Mammary epithelial cell (primary cell): ENCODE measurements at regions of chr2 and their contacts with region 1.

Region 1: DNA sequence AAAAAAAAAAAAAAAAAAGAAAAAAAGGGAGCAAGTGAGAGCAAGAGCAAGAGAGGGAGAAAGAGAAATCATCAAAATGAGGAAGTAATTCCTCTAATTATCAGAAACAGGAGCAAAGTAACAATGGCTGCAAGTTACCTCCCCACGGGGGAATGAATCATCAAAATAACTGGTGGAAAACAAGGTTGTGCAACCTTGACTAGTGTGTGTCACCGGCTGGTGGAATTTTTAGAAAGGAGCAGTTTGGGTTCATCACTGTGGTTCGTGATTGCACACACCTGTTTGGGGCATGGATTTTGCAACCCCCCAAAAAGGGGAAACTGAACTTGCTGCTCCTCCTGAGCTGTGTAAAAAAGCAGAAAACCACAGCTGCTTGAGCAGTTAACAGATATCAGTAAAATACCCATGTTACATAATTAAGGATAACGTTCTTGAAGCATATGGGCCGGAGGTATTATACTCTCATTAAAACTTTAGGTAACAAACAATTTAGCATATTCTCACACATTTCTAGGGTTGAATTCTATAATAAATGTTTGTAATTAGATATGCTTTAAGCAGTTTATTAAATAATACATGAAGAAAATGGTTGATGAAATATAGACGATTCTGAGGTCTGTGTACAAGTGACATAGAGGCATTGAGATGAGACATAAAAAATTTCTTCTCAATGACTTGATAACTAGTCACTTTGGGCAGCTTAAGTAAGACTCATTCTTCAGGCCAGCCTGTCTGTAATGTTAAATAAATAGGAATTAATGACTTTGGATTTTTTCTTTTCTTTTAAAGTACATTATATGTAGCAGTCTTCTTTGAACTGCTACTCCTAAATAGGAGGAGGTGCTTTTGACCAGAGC is 184.2 kb upstream of the ZEB2 start:
- DNase-seq: peak; percentile 90
- H3K4me3 ChIP-seq: no peak overlapping the region
- H3K27ac ChIP-seq: no peak overlapping the region
- H3K4me1 ChIP-seq: peaks cover 7% of the 10 kb centered on the region
- H3K27me3 ChIP-seq: no peaks in the 10 kb centered on the region
- CTCF ChIP-seq: no peak

Region 2: DNA sequence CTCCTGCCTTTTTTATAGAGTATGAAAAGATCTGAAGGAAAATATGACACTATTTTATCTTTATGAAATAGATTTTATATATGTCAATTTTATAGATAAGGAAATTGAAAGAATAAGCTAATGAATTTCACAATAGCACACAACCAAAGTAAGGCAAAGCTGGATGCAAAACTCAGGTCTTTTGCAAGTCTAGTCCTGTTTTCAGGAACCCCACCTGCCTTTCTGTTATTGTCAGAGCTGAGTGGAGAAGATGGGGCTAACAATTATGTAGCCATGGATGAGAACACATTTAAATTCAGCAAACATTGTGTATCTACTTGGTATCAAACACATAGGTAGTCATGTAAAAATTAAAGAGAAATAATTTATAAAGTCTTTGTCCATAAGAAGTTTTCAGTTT is 22.7 kb before region 1 on chr2:
- CTCF ChIA-PET with region 1: no interaction called
- dilution Hi-C with region 1: no loop called
- in situ Hi-C with region 1: no loop called
- intact Hi-C with region 1: loop called (anchors 1 kb)
- DNase-seq: peak; percentile 34
- H3K4me3 ChIP-seq: no peak overlapping the region
- H3K27ac ChIP-seq: no peak overlapping the region
- H3K4me1 ChIP-seq: peaks cover 25% of the 10 kb centered on the region
- H3K27me3 ChIP-seq: no peaks in the 10 kb centered on the region
- CTCF ChIP-seq: no peak

Region 3: GRCh38 chr2:144770616-144771230 is 66.6 kb after region 1 on chr2:
- CTCF ChIA-PET with region 1: no interaction called
- dilution Hi-C with region 1: no loop called
- in situ Hi-C with region 1: no loop called
- intact Hi-C with region 1: no loop called
- DNase-seq: no peak
- H3K4me3 ChIP-seq: no peak overlapping the region
- H3K27ac ChIP-seq: no peak overlapping the region
- H3K4me1 ChIP-seq: no peaks in the 10 kb centered on the region
- H3K27me3 ChIP-seq: no peaks in the 10 kb centered on the region
- CTCF ChIP-seq: no peak

Region 4: GRCh38 chr2:145638675-145639074 is 934.6 kb after region 1 on chr2:
- CTCF ChIA-PET with region 1: no interaction called
- dilution Hi-C with region 1: no loop called
- in situ Hi-C with region 1: no loop called
- intact Hi-C with region 1: no loop called
- DNase-seq: no peak
- H3K4me3 ChIP-seq: no peak overlapping the region
- H3K27ac ChIP-seq: no peak overlapping the region
- H3K4me1 ChIP-seq: no peaks in the 10 kb centered on the region
- H3K27me3 ChIP-seq: no peaks in the 10 kb centered on the region
- CTCF ChIP-seq: peak in 1 of 2 donors; percentile 11